Cardiac septum (tissue), 1 donor: ENCODE measurements at regions of chr12 and their contacts with region 1.

Region 1: GRCh38 chr12:115632308-115632707 is 645.2 kb downstream of the MED13L start:
- DNase-seq: no peak

Region 2: GRCh38 chr12:114520236-114520635 is 1112.1 kb before region 1 on chr12:
- intact Hi-C with region 1: no loop called
- DNase-seq: no peak

Region 3: DNA sequence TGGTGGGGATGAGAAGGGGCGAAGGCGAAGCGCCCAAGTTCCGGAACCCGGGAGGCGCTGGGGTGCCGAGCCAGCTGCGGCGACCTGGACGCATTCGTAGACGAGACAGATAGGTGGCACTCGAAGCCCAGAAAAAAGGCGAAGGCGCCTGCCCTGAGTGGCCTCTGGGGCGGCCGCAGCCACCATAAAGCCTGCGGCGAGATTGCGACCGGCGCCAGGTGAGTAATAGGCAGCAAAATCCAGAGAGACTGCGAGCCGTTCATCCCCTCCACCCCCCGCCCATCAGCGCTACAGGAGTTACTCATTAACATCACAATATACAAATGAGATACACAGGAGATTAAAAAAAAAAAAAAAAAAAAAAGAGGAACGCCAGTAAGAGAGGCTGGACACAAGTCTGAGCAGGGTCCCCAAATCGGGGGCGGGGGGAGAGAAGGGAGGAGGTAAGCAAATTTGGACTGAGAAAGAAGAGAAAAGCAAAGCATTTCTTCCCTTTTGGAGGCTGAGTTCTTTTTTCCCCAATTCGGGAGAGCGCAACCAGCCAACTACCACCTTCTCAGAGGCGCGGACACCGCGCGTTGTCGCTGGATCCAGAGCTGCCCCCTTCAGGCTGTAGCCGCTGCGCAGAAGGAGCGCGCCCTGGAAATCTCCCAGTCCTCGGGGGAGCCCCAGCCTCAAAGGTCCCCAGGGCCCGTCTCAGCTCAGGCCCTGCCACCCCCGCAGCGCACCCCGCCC is 964.0 kb before region 1 on chr12:
- intact Hi-C with region 1: loop called (anchors 5 kb)
- DNase-seq: peak; percentile 83

Region 4: GRCh38 chr12:115667116-115667515 is 34.8 kb after region 1 on chr12:
- intact Hi-C with region 1: no loop called
- DNase-seq: no peak

Region 5: DNA sequence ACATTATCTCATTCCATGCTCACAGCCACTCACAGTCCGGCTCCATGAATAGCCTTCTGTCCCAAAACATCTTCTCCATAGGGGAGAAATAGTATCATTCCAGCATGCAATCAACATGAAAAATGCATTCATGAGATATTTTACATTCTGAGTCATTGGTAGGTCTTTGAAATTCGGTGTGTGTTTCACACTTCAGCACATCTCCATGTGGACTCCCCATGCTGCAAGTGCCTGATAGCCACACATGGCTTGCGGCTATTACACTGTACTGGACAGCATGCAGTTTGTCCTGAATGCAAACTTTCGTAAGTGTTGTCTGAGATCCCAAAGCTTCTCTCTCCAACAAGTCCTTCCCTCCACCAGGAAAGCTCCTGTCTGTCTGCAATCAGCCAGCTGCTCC is 195.9 kb after region 1 on chr12:
- intact Hi-C with region 1: no loop called
- DNase-seq: no peak